ENCODE measurements at regions of chr1 and their contacts with region 1.

Region 1: DNA sequence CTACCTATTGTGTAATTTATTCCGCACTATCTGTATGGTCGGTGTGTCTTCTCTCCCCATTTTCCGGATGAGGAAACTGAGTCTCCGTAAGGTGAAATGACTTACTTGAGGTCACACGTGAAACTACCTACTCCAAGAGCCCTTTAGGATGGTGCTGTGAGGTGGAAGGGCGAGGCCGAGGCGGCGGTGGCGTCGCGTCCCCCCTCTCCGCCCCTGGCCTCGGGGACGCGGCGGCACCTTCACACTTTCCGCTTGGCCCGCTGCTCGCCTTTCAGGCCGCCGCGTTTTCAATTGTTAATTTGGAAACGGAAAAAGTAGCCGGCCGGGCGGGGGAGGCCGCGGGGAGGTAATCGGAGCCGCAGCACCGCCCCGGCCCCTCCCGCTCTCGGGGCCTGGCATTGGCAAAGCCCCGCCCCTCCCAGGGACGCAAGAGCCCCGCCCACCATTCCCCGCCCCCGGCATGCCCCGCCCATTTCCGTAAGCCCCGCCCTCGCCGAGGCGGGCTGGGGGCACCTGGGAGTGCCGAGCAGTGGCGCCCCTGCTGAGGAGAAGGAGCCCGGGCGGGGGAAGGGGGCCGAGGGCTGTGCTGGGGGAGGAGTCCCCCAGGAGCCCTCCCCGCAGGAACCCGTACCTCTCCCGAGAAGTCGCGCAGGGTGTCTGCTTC is 18.6 kb downstream of the KCNQ4 start:
- DNase-seq: peak; percentile 88
- ATAC-seq: peak; percentile 95
- H3K4me3 ChIP-seq: peak overlapping the region; percentile 45 to 89 (median 58)
- H3K4me3 Mint-ChIP-seq: peak overlapping the region; percentile 86
- H3K27ac ChIP-seq: peak overlapping the region; percentile 25 to 39
- H3K27ac Mint-ChIP-seq: no peak overlapping the region
- H3K4me1 ChIP-seq: peaks cover 16 to 40% of the 10 kb centered on the region in 2 donors
- H3K4me1 Mint-ChIP-seq: peaks cover 30% of the 10 kb centered on the region
- H3K27me3 ChIP-seq: no peaks in the 10 kb centered on the region
- H3K27me3 Mint-ChIP-seq: no peaks in the 10 kb centered on the region
- CTCF ChIP-seq: no peak

Region 2: DNA sequence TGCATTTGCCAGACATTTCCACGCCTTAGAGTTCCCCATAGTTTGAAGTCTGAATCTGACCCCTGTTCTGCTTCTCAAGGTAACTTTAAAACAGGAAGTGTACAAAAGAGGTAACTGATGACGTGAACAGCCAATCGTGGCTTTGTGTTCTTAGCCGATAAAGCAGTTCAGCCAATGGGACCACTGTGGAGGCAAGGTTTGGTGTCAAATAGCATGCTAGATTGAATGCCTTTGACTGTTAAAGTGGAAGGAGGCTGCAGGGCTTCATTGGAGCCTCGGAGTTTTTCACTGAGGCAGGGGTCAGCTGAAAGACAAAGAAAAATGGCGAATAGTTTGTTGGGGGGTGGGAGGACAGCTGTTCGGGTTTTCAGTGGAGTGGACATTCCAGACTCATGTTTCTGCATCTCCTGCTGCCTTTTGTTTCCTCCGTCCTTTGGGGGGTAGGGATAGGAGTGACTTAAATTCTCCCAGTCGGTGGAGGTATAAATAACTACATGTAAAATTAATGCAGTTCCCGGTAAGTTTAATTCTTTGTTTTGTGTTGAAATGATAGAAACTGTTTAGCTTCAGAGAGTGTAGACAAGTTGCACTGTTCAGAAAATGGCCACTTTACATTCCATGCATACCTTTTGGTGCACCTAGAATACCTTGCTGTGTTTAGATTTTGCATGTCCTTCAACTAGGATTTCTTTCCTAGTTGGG is 93.0 kb before region 1 on chr1:
- CTCF ChIA-PET with region 1: no interaction called
- POLR2A ChIA-PET with region 1: no interaction called
- intact Hi-C with region 1: loop called (anchors 5 kb)
- DNase-seq: peak; percentile 92
- ATAC-seq: peak; percentile 90
- H3K4me3 ChIP-seq: peak overlapping the region; percentile 55 to 88 (median 76)
- H3K4me3 Mint-ChIP-seq: peak overlapping the region; percentile 96
- H3K27ac ChIP-seq: peak overlapping the region; percentile 87 to 94
- H3K27ac Mint-ChIP-seq: peak overlapping the region; percentile 96
- H3K4me1 ChIP-seq: peaks cover 58 to 64% of the 10 kb centered on the region in 2 donors
- H3K4me1 Mint-ChIP-seq: peaks cover 74% of the 10 kb centered on the region
- H3K27me3 ChIP-seq: no peaks in the 10 kb centered on the region
- H3K27me3 Mint-ChIP-seq: no peaks in the 10 kb centered on the region
- CTCF ChIP-seq: no peak

Region 3: DNA sequence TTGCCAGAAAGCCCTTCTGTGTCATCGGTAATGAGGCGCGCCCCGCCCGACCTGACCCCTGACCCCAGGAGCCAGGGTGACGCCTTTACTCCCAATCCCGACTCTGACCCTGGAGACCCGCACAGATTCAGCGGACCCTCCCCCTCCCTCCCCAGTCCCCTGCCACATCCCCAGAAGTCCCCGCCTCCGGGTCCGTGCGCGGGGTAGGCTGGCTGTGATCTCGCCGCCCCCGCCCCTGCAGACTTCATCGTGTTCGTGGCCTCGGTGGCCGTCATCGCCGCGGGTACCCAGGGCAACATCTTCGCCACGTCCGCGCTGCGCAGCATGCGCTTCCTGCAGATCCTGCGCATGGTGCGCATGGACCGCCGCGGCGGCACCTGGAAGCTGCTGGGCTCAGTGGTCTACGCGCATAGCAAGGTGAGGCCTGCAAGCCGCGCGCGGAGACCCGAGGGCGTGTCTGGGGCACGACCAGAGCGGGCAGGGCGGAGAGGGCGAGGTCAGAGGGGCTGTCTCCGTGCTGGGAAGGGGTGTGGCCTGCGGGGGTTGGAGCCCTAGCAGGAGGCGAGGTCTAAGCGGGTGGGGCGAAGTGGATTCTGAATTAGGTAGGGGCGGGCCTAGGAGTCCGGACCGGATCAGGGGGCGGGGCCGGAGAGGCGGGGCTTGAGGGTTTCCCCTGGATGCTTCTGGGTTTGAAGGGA is 16.2 kb after region 1 on chr1:
- CTCF ChIA-PET with region 1: no interaction called
- POLR2A ChIA-PET with region 1: no interaction called
- intact Hi-C with region 1: loop called (anchors 1 kb)
- DNase-seq: peak; percentile 91
- ATAC-seq: peak; percentile 99
- H3K4me3 ChIP-seq: peak overlapping the region; percentile 5 to 77 (median 62)
- H3K4me3 Mint-ChIP-seq: peak overlapping the region; percentile 88
- H3K27ac ChIP-seq: peak overlapping the region in 1 of 2 donors; percentile 10
- H3K27ac Mint-ChIP-seq: peak overlapping the region; percentile 79
- H3K4me1 ChIP-seq: peaks cover 0 to 11% of the 10 kb centered on the region in 2 donors
- H3K4me1 Mint-ChIP-seq: peaks cover 11% of the 10 kb centered on the region
- H3K27me3 ChIP-seq: peaks cover 0 to 6% (median 0%) of the 10 kb centered on the region in 4 experiments
- H3K27me3 Mint-ChIP-seq: no peaks in the 10 kb centered on the region
- CTCF ChIP-seq: no peak

Region 4: DNA sequence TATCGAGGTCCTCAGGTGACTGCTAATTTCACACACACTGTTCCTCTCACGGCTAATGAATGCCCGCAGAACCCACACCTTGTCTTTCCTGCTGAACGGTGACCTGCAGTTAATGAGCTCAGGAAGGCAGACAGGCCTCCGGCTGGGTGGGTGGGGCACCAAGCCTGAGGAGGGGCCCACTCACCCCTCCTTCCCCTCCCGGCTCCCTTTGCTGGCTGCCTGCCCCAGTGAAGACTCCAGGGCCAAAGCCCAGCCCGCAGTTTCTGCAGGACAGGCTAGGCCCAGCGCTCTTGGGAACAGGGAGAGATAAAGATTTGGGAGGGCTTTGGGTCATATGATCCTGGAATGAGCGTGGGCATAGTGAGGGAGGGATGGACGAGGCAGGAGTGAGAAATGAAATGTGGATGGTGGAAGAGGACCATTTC is 585.5 kb after region 1 on chr1:
- CTCF ChIA-PET with region 1: no interaction called
- POLR2A ChIA-PET with region 1: no interaction called
- intact Hi-C with region 1: no loop called
- DNase-seq: no peak
- ATAC-seq: no peak
- H3K4me3 ChIP-seq: no peak overlapping the region
- H3K4me3 Mint-ChIP-seq: no peak overlapping the region
- H3K27ac ChIP-seq: no peak overlapping the region
- H3K27ac Mint-ChIP-seq: no peak overlapping the region
- H3K4me1 ChIP-seq: peaks cover 9 to 13% of the 10 kb centered on the region in 2 donors
- H3K4me1 Mint-ChIP-seq: peaks cover 9% of the 10 kb centered on the region
- H3K27me3 ChIP-seq: peaks cover 0 to 44% (median 16%) of the 10 kb centered on the region in 4 experiments
- H3K27me3 Mint-ChIP-seq: peaks cover 47% of the 10 kb centered on the region
- CTCF ChIP-seq: no peak

Measured in B cell (primary cell).